Panc1 (cell line): ENCODE measurements at regions of chr11 and their contacts with region 1.

Region 1: GRCh38 chr11:96054870-96055705 is 131.2 kb upstream of the MTMR2 start:
- DNase-seq: peak; percentile 36
- ATAC-seq: peak; percentile 75
- H3K4me3 ChIP-seq: no peak overlapping the region
- H3K27ac ChIP-seq: no peak overlapping the region
- H3K4me1 ChIP-seq: no peaks in the 10 kb centered on the region
- H3K27me3 ChIP-seq: no peaks in the 10 kb centered on the region
- CTCF ChIP-seq: peak; percentile 74; the same call in 1 of the 2 replicates

Region 2: GRCh38 chr11:95950905-95951304 is 104.2 kb before region 1 on chr11:
- CTCF ChIA-PET with region 1: no interaction called
- POLR2A ChIA-PET with region 1: no interaction called
- in situ Hi-C with region 1: no loop called
- intact Hi-C with region 1: no loop called
- DNase-seq: no peak
- ATAC-seq: no peak
- H3K4me3 ChIP-seq: no peak overlapping the region
- H3K27ac ChIP-seq: no peak overlapping the region
- H3K4me1 ChIP-seq: no peaks in the 10 kb centered on the region
- H3K27me3 ChIP-seq: no peaks in the 10 kb centered on the region
- CTCF ChIP-seq: no peak

Region 3: DNA sequence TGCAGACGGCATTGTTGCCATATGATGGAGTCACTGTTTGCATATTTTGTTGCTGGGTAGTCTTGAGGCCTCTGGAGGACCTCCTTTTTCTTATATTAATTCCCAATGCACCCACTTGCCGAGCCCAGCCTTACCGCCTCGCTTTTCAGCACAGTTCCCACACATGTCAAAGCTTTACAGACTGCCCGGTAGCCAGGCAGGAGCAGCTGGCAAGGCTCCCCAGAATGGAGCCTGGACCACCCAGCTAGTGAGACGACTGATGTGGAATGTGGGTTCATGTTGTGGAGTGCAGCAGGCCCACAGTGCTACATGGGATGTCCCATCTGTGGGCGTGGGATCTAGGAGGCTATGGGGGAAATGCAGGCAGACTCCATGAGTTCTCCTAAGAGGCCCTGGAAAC is 31.8 kb before region 1 on chr11:
- CTCF ChIA-PET with region 1: interaction called, 14 read pairs
- POLR2A ChIA-PET with region 1: no interaction called
- in situ Hi-C with region 1: no loop called
- intact Hi-C with region 1: no loop called
- DNase-seq: no peak
- ATAC-seq: no peak
- H3K4me3 ChIP-seq: no peak overlapping the region
- H3K27ac ChIP-seq: no peak overlapping the region
- H3K4me1 ChIP-seq: no peaks in the 10 kb centered on the region
- H3K27me3 ChIP-seq: no peaks in the 10 kb centered on the region
- CTCF ChIP-seq: no peak

Region 4: DNA sequence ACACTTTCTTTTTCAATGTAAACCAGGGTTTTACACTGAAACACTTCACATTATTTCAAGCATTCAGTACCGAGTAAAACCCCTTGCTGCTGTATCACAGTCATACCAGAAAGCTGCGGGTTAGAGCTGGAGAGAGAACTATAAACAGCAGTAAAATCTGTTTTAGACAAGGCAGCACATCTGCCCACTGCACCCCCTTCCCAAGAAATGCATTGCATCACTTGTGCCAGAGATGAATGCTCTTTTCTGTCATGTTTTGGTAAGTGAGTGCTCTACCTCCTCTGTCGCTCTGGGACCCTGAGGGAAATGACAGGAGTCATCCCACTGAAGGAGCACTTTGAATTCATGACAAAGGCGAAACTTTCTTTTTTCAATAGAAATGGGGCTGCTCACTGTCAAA is 180.7 kb after region 1 on chr11:
- CTCF ChIA-PET with region 1: no interaction called
- POLR2A ChIA-PET with region 1: no interaction called
- in situ Hi-C with region 1: no loop called
- intact Hi-C with region 1: loop called (anchors 5 kb)
- DNase-seq: no peak
- ATAC-seq: no peak
- H3K4me3 ChIP-seq: no peak overlapping the region
- H3K27ac ChIP-seq: no peak overlapping the region
- H3K4me1 ChIP-seq: peaks cover 6% of the 10 kb centered on the region; the same call in 1 of the 2 replicates
- H3K27me3 ChIP-seq: no peaks in the 10 kb centered on the region
- CTCF ChIP-seq: no peak